Activated CD4-positive, alpha-beta memory T cell treated with anti-CD3 and anti-CD28 coated beads for 36 hours (primary cell): ENCODE measurements at regions of chr12 and their contacts with region 1.

Region 1: DNA sequence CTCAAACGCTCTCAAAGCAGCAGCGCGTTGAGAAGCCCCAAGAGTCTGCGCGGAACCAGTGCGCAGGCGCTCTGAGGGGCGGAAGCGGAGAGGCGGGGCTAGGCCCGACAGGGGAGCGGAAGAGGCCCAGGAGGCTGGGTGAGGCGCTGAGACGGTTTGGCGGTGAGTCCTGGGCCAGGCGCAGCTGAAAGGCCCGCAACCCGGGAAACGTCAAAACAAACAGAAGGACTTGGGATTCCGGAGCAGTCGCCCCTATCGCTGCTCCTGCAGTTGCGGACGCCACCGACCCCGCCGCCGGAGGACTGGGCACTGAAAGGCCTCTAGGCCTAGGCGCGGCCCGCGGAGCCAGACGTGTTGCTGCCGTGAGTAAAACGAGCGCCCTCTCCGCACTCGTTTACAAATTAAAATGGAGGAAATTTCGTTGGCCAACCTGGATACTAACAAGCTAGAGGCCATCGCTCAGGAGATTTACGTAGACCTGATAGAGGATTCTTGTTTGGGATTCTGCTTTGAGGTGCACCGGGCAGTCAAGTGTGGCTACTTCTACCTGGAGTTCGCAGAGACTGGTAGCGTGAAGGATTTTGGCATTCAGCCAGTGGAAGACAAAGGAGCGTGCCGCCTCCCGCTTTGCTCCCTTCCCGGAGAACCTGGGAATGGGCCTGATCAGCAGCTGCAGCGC is at the start of gene ATXN7L3B:
- DNase-seq: peak; percentile 97
- H3K4me3 Mint-ChIP-seq: peak within 1 kb of the TSS; percentile 92
- H3K27ac Mint-ChIP-seq: peak within 1 kb of the TSS; percentile 94
- H3K4me1 Mint-ChIP-seq: peaks cover 48% of the 10 kb centered on the region
- H3K27me3 Mint-ChIP-seq: no peaks in the 10 kb centered on the region
- total RNA-seq, gene ATXN7L3B: 16.7 to 17.0 TPM

Region 2: GRCh38 chr12:74021937-74022336 is 515.9 kb before region 1 on chr12:
- CTCF ChIA-PET with region 1: interaction called, 4 read pairs
- POLR2A ChIA-PET with region 1: no interaction called
- intact Hi-C with region 1: loop called (anchors 10 kb)
- DNase-seq: peak; percentile 40
- H3K4me3 Mint-ChIP-seq: no peak overlapping the region
- H3K27ac Mint-ChIP-seq: no peak overlapping the region
- H3K4me1 Mint-ChIP-seq: no peaks in the 10 kb centered on the region
- H3K27me3 Mint-ChIP-seq: no peaks in the 10 kb centered on the region

Region 3: DNA sequence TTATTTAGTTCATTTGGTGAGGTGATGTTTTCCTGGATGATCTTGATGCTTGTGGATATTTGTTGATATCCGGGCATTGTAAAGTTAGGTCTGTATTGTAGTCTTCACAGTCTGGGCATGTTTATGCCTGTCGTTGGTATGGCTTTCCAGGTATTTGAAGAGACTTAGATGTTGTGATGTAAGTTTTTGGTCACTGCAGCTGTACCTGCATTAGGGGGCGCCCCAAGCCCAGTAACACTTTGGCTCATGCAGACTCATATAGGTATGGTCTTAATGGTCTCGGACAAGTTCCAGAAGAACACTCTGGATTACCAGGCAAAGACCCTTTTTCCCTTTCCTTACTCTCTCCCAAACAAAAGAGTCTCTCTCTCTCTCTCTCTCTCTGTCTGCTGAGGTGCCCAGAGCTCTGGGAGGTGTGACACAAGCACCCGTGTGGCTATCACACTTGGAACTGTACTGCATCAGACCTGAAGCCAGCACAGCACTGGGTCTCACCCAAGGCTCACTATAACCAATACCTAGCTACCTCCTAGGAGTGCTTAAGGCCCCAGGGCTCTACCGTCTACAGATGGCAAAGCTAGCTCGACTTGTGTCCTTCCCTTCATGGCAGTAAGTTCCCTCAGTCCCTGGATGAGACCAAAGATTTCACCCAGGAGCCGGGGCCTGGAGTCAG is 426.0 kb before region 1 on chr12:
- CTCF ChIA-PET with region 1: no interaction called
- POLR2A ChIA-PET with region 1: no interaction called
- intact Hi-C with region 1: loop called (anchors 5 kb)
- DNase-seq: peak; percentile 14
- H3K4me3 Mint-ChIP-seq: no peak overlapping the region
- H3K27ac Mint-ChIP-seq: no peak overlapping the region
- H3K4me1 Mint-ChIP-seq: no peaks in the 10 kb centered on the region
- H3K27me3 Mint-ChIP-seq: no peaks in the 10 kb centered on the region

Region 4: GRCh38 chr12:74370608-74371216 is 167.1 kb before region 1 on chr12:
- CTCF ChIA-PET with region 1: no interaction called
- POLR2A ChIA-PET with region 1: no interaction called
- intact Hi-C with region 1: no loop called
- DNase-seq: no peak
- H3K4me3 Mint-ChIP-seq: no peak overlapping the region
- H3K27ac Mint-ChIP-seq: no peak overlapping the region
- H3K4me1 Mint-ChIP-seq: no peaks in the 10 kb centered on the region
- H3K27me3 Mint-ChIP-seq: peaks cover 4% of the 10 kb centered on the region

Region 5: DNA sequence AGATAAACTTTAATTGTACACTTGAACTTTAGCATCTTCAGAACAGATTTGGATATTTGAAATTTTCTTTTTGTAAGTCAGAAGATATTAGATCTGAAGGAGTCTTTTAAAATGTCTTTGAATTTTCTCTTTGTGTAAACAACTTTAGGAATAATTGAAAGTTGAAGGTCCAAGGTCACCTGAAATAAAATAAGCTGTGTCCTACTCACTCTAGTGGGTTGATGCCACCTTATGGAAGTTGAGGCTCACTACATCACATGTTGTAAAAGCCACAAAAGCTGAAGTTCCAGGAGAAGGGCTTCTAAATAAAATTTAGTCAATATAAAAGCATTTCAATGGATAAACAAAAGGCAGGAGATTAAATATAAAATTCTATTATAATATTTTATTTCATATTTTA is 122.2 kb before region 1 on chr12:
- CTCF ChIA-PET with region 1: no interaction called
- POLR2A ChIA-PET with region 1: no interaction called
- intact Hi-C with region 1: loop called (anchors 2 kb)
- DNase-seq: no peak
- H3K4me3 Mint-ChIP-seq: no peak overlapping the region
- H3K27ac Mint-ChIP-seq: no peak overlapping the region
- H3K4me1 Mint-ChIP-seq: no peaks in the 10 kb centered on the region
- H3K27me3 Mint-ChIP-seq: peaks cover 10% of the 10 kb centered on the region